Transverse colon (tissue), 4 donors: ENCODE measurements at regions of chr16 and their contacts with region 1.

Region 1: DNA sequence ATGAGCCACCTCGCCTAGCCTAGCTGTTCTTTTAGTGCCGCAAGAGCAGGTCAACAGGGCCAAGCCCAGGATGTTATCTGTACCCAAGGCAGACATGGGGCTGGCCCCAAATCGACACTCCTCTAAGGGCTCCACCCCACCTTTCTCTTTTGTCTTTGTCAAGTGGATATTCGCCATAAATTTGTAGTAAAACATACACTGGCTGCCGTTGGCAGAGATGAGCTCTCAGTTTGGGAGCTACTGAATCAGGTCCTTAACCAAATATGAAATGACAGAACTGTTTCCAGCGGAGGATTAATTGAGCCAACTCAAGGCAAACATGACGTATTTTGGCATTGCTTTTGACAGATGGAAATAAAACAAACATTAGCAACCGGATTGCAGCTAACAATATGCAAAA is 556.9 kb upstream of the CDH5 start:
- DNase-seq: no peak
- H3K4me3 ChIP-seq: no peak overlapping the region
- H3K27ac ChIP-seq: no peak overlapping the region
- H3K4me1 ChIP-seq: no peaks in the 10 kb centered on the region
- H3K27me3 ChIP-seq: no peaks in the 10 kb centered on the region
- CTCF ChIP-seq: no peak
- EP300 ChIP-seq: no peak
- POLR2A ChIP-seq: no peak

Region 2: DNA sequence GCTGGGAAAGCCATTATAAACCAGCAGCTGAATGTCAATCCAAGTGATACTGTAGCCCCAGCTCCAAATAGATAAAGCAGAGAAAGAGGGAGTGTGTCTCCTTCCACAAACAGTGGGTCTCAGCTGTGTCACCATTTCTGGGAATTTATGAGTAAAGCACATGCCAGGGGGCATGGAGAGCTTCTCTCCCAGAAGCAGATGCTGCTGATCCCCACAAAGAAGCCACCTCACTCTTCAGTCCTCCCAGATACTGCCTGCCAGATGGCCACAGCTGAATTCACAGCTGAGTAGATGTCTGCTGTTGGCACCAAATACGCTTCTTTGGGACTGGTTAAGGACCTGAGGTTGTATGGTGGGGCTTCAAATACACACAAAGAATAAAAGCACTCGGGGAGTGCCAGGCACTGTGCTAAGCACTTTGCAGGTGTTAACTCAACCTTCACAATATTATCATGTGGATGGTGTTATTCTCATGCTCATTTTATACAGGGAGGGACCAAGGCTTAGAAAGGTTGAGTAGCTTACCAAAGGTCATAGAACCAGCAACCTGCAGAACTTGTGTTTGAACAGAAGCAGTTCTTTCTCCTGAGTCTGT is 986.0 kb before region 1 on chr16:
- in situ Hi-C with region 1: no loop called
- intact Hi-C with region 1: loop called (anchors 5 kb)
- DNase-seq: no peak
- H3K4me3 ChIP-seq: no peak overlapping the region
- H3K27ac ChIP-seq: no peak overlapping the region
- H3K4me1 ChIP-seq: no peaks in the 10 kb centered on the region
- H3K27me3 ChIP-seq: no peaks in the 10 kb centered on the region
- CTCF ChIP-seq: no peak
- EP300 ChIP-seq: no peak
- POLR2A ChIP-seq: no peak